ENCODE measurements at regions of chr2 and their contacts with region 1.

Region 1: DNA sequence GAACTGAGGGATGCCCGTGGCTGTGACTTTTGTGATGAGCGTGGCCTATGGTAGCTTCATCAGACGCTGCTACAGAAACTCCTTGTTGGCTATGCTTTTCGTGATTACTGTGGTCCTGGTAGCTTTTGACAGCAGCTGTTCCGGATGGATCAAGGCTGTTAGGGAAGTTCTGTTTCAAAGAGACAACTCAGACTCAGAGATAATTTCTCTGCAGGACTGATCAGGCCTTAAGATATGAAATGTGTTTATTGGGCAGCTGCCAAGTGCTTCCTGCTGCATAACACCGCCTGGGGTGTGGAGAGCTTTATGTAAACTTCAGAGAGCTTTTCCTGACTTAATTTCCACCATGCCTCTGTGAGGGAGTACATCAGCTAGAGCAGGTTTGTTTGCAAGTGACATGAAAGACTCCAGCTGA is 243.8 kb downstream of the TSN start:
- DNase-seq: peak; percentile 97
- H3K4me3 ChIP-seq: no peak overlapping the region
- H3K27ac ChIP-seq: peak overlapping the region; percentile 85
- H3K4me1 ChIP-seq: peaks cover 43% of the 10 kb centered on the region
- H3K27me3 ChIP-seq: no peaks in the 10 kb centered on the region
- CTCF ChIP-seq: no peak

Region 2: DNA sequence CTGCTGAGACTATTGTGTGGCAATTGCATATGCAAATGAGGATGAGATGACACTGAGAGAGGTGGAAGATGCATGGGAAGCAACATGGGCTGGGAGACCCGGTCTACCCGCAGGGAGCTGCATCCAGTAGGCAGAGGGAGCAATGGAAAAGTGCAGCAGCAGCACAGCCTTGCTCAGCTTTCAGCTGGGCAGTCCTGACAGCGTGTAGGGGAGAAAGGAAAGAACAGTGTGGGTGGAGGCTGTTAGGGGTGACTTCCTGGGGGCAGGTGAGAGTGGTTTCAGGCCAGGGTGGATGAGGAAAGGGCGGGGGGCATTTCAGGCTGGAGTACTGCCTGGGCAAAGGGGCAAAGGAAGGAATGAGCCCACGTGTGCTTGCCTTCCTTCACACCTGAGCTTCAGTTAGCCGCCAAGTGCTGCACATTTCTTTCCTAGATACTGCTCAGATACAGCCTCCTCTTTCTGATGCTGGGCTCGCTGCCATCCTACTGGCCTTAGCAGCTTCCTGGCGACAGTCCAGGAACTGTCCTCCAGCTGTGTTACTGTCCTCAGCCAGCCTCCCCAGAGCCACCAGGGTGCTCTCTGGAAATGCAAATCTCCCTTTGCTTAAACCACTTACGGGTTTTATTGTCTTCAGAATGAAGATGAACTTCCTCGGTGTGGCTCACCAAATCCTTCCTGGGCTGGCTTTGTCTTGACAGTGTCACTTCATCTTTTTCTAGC is 32.4 kb after region 1 on chr2:
- CTCF ChIA-PET with region 1: no interaction called
- POLR2A ChIA-PET with region 1: no interaction called
- intact Hi-C with region 1: loop called (anchors 2 kb)
- DNase-seq: peak; percentile 94
- H3K4me3 ChIP-seq: no peak overlapping the region
- H3K27ac ChIP-seq: peak overlapping the region; percentile 49
- H3K4me1 ChIP-seq: peaks cover 60% of the 10 kb centered on the region
- H3K27me3 ChIP-seq: no peaks in the 10 kb centered on the region
- CTCF ChIP-seq: 0 out of 2 replicates have a peak, but pooled peaks have one; percentile 19

Measured in A673 (cell line).